ENCODE measurements at regions of chr13 and their contacts with region 1.

Region 1: GRCh38 chr13:79393564-79394249 is 12.3 kb downstream of the RBM26 start:
- DNase-seq: peak; percentile 83
- H3K4me3 ChIP-seq: no peak overlapping the region
- H3K27ac ChIP-seq: peak overlapping the region; percentile 8
- H3K4me1 ChIP-seq: peaks cover 18% of the 10 kb centered on the region
- H3K27me3 ChIP-seq: no peaks in the 10 kb centered on the region
- CTCF ChIP-seq: no peak
- POLR2A ChIP-seq: no peak

Region 2: DNA sequence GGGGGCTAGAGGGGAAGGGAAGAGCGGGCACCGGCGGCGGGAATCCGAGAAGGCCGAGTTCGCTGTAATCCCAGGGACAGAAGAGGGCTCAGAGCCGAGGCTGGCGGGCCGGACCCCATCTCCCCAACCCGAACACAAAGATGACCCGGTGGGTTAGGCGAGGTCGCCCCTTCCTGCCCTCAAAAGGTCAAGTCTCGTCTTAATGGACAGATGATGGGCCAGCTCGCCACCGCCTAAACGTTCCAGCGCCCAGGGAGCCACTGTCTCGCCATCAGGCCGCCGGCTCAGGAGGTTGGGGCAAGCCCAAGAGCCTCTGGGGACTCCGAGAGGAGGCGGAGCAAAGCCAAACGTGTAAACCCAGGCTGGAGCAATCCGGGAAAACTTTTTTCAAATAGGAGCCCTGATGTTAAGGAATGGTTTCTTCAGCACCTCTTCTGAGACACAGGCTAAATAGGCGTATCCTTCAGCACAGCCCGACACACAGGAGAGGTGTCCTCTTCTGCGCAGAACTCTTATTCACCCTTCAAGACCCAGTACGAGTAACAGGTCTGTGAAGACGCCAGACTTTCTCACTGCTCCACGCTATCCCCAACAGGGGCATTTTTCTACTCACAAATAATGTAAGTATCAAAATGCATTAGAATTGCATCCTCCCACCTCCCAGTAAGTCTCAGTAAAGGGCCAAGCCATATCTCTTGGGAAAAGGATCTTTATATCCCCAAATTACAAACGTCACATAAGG is 784.1 kb before region 1 on chr13:
- CTCF ChIA-PET with region 1: no interaction called
- POLR2A ChIA-PET with region 1: no interaction called
- dilution Hi-C with region 1: no loop called
- intact Hi-C with region 1: loop called (anchors 5 kb)
- DNase-seq: peak; percentile 30
- H3K4me3 ChIP-seq: peak overlapping the region; percentile 43 to 79 (median 64)
- H3K27ac ChIP-seq: no peak overlapping the region
- H3K4me1 ChIP-seq: peaks cover 7% of the 10 kb centered on the region
- H3K27me3 ChIP-seq: peaks cover 27 to 50% of the 10 kb centered on the region in 2 experiments
- CTCF ChIP-seq: no peak
- POLR2A ChIP-seq: no peak

Region 3: GRCh38 chr13:78978381-78978998 is 415.2 kb before region 1 on chr13:
- CTCF ChIA-PET with region 1: interaction called, 6 read pairs
- POLR2A ChIA-PET with region 1: no interaction called
- dilution Hi-C with region 1: no loop called
- intact Hi-C with region 1: loop called (anchors 5 kb)
- DNase-seq: peak; percentile 70
- H3K4me3 ChIP-seq: no peak overlapping the region
- H3K27ac ChIP-seq: no peak overlapping the region
- H3K4me1 ChIP-seq: no peaks in the 10 kb centered on the region
- H3K27me3 ChIP-seq: no peaks in the 10 kb centered on the region
- CTCF ChIP-seq: peak; percentile 43 to 59
- POLR2A ChIP-seq: no peak

Region 4: DNA sequence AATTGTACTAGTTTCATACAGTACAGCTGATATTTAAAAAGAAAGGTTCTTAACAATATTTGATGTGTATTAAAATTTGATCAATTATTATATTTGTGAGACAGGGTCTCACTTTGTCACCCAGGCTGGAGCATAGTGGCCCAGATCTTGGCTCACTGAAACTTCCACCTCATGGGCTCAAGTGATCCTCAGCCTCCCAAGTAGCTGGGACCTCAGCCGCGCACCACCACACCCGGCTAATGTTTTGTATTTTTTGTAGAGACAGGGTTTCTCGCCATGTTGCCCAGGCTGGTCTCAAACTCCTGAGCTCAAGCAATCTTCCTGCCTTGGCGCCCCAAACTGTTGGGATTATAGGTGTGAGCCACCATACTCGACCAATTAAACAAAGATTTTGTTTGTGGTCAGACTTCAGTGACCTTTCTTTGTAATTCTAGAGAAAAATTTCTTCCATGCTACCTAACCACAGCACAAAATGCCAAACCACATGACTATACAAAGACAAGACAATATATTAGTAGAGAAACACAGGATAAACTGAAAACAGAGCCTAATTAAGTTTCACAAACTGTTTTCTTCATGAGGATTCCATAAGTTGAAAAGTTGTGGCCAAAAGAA is 47.3 kb before region 1 on chr13:
- CTCF ChIA-PET with region 1: interaction called, 10 read pairs
- POLR2A ChIA-PET with region 1: no interaction called
- dilution Hi-C with region 1: no loop called
- intact Hi-C with region 1: no loop called
- DNase-seq: no peak
- H3K4me3 ChIP-seq: no peak overlapping the region
- H3K27ac ChIP-seq: no peak overlapping the region
- H3K4me1 ChIP-seq: no peaks in the 10 kb centered on the region
- H3K27me3 ChIP-seq: no peaks in the 10 kb centered on the region
- CTCF ChIP-seq: no peak
- POLR2A ChIP-seq: no peak

Region 5: DNA sequence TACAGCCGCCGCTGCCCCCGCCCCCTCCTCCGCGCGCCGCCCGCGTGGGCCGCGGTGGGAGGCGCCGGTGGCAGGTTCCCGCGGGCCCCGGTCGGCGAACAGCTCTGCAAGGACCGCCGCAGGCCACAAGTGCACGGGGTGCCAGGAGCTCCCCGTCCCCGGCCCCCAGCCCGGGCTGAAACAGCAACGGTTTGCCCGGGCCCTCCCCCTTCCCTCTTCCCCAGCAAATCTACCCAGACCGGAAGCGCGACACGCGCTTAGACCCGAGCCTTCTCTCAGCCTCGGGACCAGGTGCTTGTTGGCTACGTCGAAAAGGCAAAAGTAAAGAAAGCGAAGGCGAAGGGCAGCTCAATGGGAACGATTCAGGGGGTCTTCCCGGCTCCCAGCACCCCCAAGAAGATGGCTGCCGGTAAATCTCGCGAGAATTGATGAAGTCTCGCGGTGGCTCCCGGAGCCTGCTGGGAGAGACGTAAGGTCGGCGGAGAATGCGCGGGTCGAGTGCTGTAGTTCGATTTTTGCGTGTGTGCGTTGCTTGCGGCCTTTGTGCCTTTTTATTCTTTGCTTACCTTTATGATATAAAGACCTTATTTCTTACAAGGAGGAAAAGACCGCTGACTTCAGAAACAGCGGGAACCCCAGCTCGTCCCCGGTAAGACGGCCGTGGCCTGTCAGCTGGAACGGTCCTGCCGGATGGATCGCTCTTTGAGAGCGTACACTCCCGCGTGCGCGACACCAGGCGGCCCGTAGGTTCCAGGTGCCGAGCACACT is 12.3 kb after region 1 on chr13 and contains the start of gene RBM26:
- CTCF ChIA-PET with region 1: interaction called, 20 read pairs
- POLR2A ChIA-PET with region 1: no interaction called
- dilution Hi-C with region 1: no loop called
- intact Hi-C with region 1: no loop called
- DNase-seq: peak; percentile 95
- H3K4me3 ChIP-seq: peak within 1 kb of the TSS; percentile 89 to 99 (median 99)
- H3K27ac ChIP-seq: peak within 1 kb of the TSS; percentile 90
- H3K4me1 ChIP-seq: peaks cover 40% of the 10 kb centered on the region
- H3K27me3 ChIP-seq: no peaks in the 10 kb centered on the region
- CTCF ChIP-seq: no peak
- POLR2A ChIP-seq: peak; percentile 84
- total RNA-seq, gene RBM26: 43.7 and 54.3 TPM in 2 replicates

Region 6: GRCh38 chr13:79468819-79469218 is 75.1 kb after region 1 on chr13:
- CTCF ChIA-PET with region 1: no interaction called
- POLR2A ChIA-PET with region 1: no interaction called
- dilution Hi-C with region 1: no loop called
- intact Hi-C with region 1: no loop called
- DNase-seq: no peak
- H3K4me3 ChIP-seq: no peak overlapping the region
- H3K27ac ChIP-seq: no peak overlapping the region
- H3K4me1 ChIP-seq: no peaks in the 10 kb centered on the region
- H3K27me3 ChIP-seq: no peaks in the 10 kb centered on the region
- CTCF ChIP-seq: no peak
- POLR2A ChIP-seq: no peak

Measured in endothelial cell of umbilical vein (primary cell).